ENCODE measurements at regions of chr2 and their contacts with region 1.

Region 1: GRCh38 chr2:113390124-113390849 is 47.2 kb upstream of the ZNG1B start:
- DNase-seq: peak; percentile 31
- H3K4me3 ChIP-seq: no peak overlapping the region
- H3K27me3 ChIP-seq: no peaks in the 10 kb centered on the region
- CTCF ChIP-seq: peak; percentile 72

Region 2: GRCh38 chr2:113124181-113124961 is 265.9 kb before region 1 on chr2:
- CTCF ChIA-PET with region 1: interaction called, 14 read pairs
- POLR2A ChIA-PET with region 1: no interaction called
- DNase-seq: no peak
- H3K4me3 ChIP-seq: no peak overlapping the region
- H3K27me3 ChIP-seq: peaks cover 3% of the 10 kb centered on the region; the same call in 1 of the 2 replicates
- CTCF ChIP-seq: no peak

Region 3: DNA sequence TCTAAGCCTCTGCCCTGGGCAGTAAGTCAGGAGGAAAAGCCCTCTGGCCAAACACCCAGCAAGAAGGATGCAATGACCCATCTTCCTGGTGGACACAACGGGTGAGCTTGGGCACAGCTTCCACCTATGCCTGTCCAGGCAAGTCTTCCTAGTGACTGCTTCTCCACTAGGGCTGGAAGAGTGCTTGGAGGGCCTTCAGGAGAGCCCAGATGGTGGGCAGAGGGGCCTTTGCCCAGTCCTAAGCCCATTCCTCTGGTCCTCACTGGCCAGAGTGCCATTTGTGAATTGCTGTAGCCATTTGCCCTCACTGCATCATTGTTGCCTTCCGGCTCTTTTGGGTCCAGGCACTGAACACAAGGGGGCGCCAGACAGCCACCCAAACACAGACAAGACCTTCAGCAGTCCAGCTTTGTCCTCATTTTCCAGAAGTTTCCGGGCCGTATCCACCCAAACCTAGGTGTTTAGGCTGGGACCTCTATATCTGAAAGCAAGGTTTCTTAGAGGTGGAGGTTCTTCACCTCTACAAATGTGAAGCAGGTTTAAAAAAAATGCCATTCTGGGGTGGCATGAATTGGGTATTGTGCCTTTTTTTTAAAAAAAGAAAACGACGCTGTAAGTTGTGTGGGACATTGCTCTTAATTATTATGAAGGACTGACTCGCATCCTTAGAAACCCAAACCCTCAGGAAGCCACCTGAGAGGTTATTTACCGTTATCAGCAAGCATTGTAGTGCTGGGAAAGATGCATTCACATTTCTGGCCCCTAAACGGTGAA is 141.1 kb before region 1 on chr2:
- CTCF ChIA-PET with region 1: interaction called, 14 read pairs
- POLR2A ChIA-PET with region 1: no interaction called
- DNase-seq: no peak
- H3K4me3 ChIP-seq: no peak overlapping the region
- H3K27me3 ChIP-seq: no peaks in the 10 kb centered on the region
- CTCF ChIP-seq: peak; percentile 90

Region 4: DNA sequence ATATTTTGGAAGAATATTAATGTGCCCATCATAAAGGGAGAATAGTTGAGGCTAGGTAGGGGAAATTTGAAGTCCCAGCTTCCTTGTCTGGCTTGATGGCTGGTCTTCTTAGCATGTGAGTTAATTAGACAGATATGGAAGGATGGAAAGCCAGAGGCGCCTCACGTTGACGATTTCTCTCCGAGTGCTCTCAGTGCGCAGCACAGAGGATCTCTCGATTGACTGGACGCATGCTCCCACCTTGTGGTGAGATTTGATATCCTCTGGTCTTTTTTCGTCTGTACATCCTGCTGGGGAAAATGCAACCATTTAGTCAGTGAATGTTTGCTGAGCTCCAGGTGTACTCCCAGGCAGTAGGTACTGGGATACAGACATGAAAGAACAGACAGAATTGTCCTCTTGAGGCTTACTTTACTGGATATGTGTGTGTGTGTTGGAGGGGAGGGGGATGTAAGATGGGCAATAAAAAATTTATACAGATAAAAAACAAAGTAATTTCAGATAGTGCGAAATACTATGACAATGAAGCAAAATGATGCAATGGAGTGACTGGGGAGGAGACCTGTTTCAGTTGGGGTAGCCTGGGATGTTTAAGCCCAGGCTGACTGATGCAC is 19.7 kb before region 1 on chr2:
- CTCF ChIA-PET with region 1: interaction called, 20 read pairs
- POLR2A ChIA-PET with region 1: no interaction called
- DNase-seq: no peak
- H3K4me3 ChIP-seq: no peak overlapping the region
- H3K27me3 ChIP-seq: no peaks in the 10 kb centered on the region; the same call in 1 of the 2 replicates
- CTCF ChIP-seq: peak; percentile 60

Region 5: DNA sequence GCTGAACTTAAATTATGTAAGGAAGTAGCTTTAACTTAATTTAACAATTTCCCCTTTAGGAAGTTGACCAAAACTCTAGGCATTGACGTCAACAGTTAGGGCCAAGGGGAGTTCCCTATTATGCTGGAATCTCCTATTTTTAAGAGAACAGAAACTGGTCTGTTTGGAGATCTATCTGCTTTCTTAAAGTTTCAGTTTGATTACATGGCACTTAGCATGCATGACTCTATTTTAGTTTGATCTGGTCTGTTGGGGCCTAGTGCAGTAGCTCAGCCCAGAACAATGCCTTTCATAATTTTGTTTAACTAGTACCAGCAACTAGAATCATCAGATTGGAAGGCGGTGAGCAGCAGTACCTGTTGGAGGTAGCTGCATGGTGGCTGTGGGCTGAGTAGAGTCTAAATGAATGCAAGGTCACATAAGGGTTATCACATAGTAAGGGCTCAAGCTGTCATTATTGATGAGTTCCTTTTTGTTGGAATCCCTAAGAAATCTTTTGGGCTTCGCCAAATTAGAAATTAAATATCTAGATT is 13.3 kb before region 1 on chr2:
- CTCF ChIA-PET with region 1: interaction called, 20 read pairs
- POLR2A ChIA-PET with region 1: no interaction called
- DNase-seq: no peak
- H3K4me3 ChIP-seq: no peak overlapping the region
- H3K27me3 ChIP-seq: no peaks in the 10 kb centered on the region; the same call in 1 of the 2 replicates
- CTCF ChIP-seq: no peak

Region 6: DNA sequence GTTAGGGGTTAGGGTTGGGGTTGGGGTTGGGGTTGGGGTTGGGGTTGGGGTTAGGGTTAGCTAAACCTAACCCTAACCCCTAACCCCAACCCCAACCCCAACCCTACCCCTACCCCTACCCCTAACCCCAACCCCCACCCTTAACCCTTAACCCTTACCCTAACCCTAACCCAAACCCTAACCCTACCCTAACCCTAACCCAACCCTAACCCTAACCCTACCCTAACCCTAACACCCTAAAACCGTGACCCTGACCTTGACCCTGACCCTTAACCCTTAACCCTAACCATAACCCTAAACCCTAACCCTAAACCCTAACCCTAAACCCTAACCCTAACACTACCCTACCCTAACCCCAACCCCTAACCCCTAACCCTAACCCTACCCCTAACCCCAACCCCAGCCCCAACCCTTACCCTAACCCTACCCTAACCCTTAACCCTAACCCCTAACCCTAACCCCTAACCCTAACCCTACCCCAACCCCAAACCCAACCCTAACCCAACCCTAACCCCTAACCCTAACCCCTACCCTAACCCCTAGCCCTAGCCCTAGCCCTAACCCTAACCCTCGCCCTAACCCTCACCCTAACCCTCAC is 212.7 kb after region 1 on chr2:
- CTCF ChIA-PET with region 1: no interaction called
- POLR2A ChIA-PET with region 1: no interaction called
- DNase-seq: no peak
- H3K4me3 ChIP-seq: peak overlapping the region; percentile 50
- H3K27me3 ChIP-seq: no peaks in the 10 kb centered on the region
- CTCF ChIP-seq: no peak

Measured in BJ (cell line).